ENCODE measurements at regions of chr1 and their contacts with region 1.

Region 1: DNA sequence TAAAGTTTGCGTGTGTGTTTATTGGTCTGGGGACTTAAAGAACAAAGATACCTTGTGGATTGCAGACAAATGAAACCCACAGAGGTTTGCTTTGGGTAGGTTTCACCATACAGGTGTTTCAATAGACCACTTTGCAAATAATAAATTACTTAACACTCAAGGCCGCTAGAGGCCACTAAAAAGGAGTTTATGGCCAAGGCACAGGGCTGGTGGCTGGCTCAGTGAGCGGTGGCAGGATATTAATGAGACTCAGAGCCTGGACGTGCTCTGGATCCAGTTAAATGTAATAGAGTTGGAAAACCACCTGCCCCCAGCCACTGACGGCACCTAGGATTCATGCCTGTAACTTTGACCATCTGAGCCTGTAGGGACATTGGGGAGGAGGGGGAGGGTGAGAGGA is 44.5 kb downstream of the LRRC38 start:
- DNase-seq: no peak
- H3K4me3 ChIP-seq: no peak overlapping the region
- H3K27ac ChIP-seq: no peak overlapping the region
- H3K4me1 ChIP-seq: no peaks in the 10 kb centered on the region
- H3K27me3 ChIP-seq: peaks cover 17% of the 10 kb centered on the region
- CTCF ChIP-seq: peak; percentile 24; the same call in 1 of the 2 replicates

Region 2: GRCh38 chr1:13617108-13617507 is 147.8 kb after region 1 on chr1:
- CTCF ChIA-PET with region 1: interaction called, 22 read pairs
- POLR2A ChIA-PET with region 1: no interaction called
- intact Hi-C with region 1: no loop called
- DNase-seq: no peak
- H3K4me3 ChIP-seq: no peak overlapping the region
- H3K27ac ChIP-seq: no peak overlapping the region
- H3K4me1 ChIP-seq: no peaks in the 10 kb centered on the region
- H3K27me3 ChIP-seq: peaks cover 16% of the 10 kb centered on the region
- CTCF ChIP-seq: no peak